Esophagus muscularis mucosa (tissue), 4 donors: ENCODE measurements at regions of chr18 and their contacts with region 1.

Region 1: GRCh38 chr18:74551936-74552555 is 17.7 kb downstream of the CNDP1 start:
- DNase-seq: peak; percentile 95
- H3K4me3 ChIP-seq: no peak overlapping the region
- H3K27ac ChIP-seq: no peak overlapping the region
- H3K4me1 ChIP-seq: peaks cover 0 to 14% (median 9%) of the 10 kb centered on the region in 4 donors
- H3K27me3 ChIP-seq: peaks cover 0 to 12% (median 0%) of the 10 kb centered on the region in 4 donors
- CTCF ChIP-seq: peak; percentile 66 to 81 (median 79)
- EP300 ChIP-seq: no peak
- POLR2A ChIP-seq: no peak

Region 2: GRCh38 chr18:74196220-74197119 is 355.6 kb before region 1 on chr18:
- intact Hi-C with region 1: loop called (anchors 5 kb)
- DNase-seq: no peak
- H3K4me3 ChIP-seq: peak overlapping the region in 2 of 4 donors; percentile 18 to 46
- H3K27ac ChIP-seq: no peak overlapping the region
- H3K4me1 ChIP-seq: peaks cover 0 to 6% (median 5%) of the 10 kb centered on the region in 4 donors
- H3K27me3 ChIP-seq: peaks cover 0 to 27% (median 0%) of the 10 kb centered on the region in 4 donors
- CTCF ChIP-seq: peak; percentile 88 to 92 (median 91)
- EP300 ChIP-seq: no peak
- POLR2A ChIP-seq: no peak

Region 3: GRCh38 chr18:74353169-74353775 is 198.8 kb before region 1 on chr18:
- intact Hi-C with region 1: loop called (anchors 2 kb)
- DNase-seq: no peak
- H3K4me3 ChIP-seq: no peak overlapping the region
- H3K27ac ChIP-seq: no peak overlapping the region
- H3K4me1 ChIP-seq: peaks cover 0 to 3% (median 0%) of the 10 kb centered on the region in 4 donors
- H3K27me3 ChIP-seq: no peaks in the 10 kb centered on the region
- CTCF ChIP-seq: peak; percentile 67 to 71 (median 68)
- EP300 ChIP-seq: no peak
- POLR2A ChIP-seq: no peak

Region 4: GRCh38 chr18:74990563-74991081 is 438.6 kb after region 1 on chr18:
- intact Hi-C with region 1: no loop called
- DNase-seq: no peak
- H3K4me3 ChIP-seq: no peak overlapping the region
- H3K27ac ChIP-seq: peak overlapping the region in 1 of 4 donors; percentile 5
- H3K4me1 ChIP-seq: no peaks in the 10 kb centered on the region
- H3K27me3 ChIP-seq: no peaks in the 10 kb centered on the region
- CTCF ChIP-seq: no peak
- EP300 ChIP-seq: no peak
- POLR2A ChIP-seq: no peak